Common myeloid progenitor, CD34-positive (primary cell): ENCODE measurements at regions of chr2 and their contacts with region 1.

Region 1: GRCh38 chr2:10072656-10073480 is 7.3 kb downstream of the CYS1 start:
- DNase-seq: peak; percentile 86 to 93 (median 90)
- H3K4me3 ChIP-seq: no peak overlapping the region
- H3K27ac ChIP-seq: no peak overlapping the region
- H3K4me1 ChIP-seq: peaks cover 0 to 4% (median under 1%) of the 10 kb centered on the region in 4 experiments
- H3K27me3 ChIP-seq: peaks cover 0 to 52% (median 19%) of the 10 kb centered on the region in 5 experiments

Region 2: DNA sequence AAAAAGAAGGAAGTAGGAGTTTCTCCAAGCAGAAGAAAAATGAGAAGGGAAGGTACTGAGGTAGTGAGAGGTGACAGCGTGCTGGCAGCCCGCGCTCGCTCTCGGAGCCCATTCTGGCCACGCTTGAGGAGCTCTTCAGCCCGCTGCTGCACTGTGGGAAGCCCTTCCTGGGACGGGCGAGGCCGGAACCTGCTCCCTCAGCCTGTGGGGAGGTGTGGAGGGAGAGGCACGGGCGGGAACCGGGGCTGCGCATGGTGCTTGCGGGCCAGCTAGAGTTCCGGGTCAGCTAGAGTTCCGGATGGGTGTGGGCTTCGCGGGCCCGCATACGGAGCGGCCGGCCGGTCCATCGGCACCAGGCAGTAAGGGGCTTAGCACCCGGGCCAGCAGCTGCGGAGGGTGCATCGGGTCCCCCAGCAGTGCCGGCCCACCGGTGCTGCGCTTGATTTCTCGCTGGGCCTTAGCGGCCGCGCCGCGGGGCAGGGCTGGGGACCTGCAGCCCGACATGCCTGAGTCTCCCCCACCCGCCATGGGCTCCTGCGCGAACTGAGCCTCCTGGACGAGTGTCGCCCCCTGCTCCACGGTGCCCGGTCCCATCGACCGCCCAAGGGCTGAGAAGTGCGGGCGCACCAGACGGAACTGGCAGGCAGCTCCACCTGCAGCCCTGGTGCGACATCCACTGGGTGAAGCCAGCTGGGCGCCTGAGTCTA is 18.5 kb after region 1 on chr2:
- CTCF ChIA-PET with region 1: interaction called, 130 read pairs
- POLR2A ChIA-PET with region 1: interaction called, 3 read pairs
- DNase-seq: peak; percentile 29 to 67 (median 46)
- H3K4me3 ChIP-seq: peak overlapping the region in 6 of 7 experiments; percentile 43 to 75 (median 52)
- H3K27ac ChIP-seq: no peak overlapping the region
- H3K4me1 ChIP-seq: peaks cover 0 to 8% (median 6%) of the 10 kb centered on the region in 4 experiments
- H3K27me3 ChIP-seq: peaks cover 0 to 39% (median 12%) of the 10 kb centered on the region in 5 experiments

Region 3: DNA sequence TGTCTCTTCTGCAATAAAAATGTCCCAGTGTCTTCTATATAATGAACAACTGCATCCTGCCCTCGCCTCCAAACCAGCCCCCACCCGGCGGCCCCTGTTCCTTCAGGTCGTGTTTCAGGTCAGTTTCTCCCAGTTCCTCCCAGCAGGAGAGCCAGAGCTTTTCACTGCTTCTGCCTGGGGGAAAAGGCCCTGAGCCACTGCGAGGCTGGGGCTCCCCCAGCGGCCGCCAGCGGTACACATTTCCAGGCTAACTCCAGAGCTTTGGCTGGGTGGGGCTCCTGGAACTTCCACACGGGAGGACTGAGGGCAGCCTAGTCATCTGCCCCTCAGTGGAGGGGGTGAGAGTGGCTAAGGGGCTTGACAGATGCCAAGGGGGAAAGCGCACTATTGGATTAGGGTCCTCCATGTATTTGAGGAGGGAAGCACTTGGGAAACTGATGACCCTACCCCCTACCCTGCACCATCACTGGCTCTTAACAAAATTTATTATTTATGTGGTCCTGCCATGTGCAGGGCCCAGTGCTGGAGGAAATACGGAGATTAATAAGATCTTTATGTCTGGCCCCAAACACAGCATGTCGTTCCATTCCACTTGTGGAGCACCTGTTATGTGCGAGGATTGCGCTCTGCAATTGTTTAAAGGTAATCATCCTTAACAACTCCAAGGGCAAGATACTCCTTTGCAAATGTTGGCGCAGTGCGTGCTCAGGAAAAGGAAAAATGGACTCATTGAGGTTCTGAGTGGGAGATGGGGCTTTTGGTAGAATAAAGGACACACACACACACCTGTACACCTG is 24.7 kb after region 1 on chr2:
- CTCF ChIA-PET with region 1: interaction called, 130 read pairs
- POLR2A ChIA-PET with region 1: no interaction called
- DNase-seq: peak in 1 of 3 donors; percentile 20
- H3K4me3 ChIP-seq: no peak overlapping the region
- H3K27ac ChIP-seq: no peak overlapping the region
- H3K4me1 ChIP-seq: no peaks in the 10 kb centered on the region
- H3K27me3 ChIP-seq: peaks cover 0 to 20% (median 6%) of the 10 kb centered on the region in 5 experiments

Region 4: DNA sequence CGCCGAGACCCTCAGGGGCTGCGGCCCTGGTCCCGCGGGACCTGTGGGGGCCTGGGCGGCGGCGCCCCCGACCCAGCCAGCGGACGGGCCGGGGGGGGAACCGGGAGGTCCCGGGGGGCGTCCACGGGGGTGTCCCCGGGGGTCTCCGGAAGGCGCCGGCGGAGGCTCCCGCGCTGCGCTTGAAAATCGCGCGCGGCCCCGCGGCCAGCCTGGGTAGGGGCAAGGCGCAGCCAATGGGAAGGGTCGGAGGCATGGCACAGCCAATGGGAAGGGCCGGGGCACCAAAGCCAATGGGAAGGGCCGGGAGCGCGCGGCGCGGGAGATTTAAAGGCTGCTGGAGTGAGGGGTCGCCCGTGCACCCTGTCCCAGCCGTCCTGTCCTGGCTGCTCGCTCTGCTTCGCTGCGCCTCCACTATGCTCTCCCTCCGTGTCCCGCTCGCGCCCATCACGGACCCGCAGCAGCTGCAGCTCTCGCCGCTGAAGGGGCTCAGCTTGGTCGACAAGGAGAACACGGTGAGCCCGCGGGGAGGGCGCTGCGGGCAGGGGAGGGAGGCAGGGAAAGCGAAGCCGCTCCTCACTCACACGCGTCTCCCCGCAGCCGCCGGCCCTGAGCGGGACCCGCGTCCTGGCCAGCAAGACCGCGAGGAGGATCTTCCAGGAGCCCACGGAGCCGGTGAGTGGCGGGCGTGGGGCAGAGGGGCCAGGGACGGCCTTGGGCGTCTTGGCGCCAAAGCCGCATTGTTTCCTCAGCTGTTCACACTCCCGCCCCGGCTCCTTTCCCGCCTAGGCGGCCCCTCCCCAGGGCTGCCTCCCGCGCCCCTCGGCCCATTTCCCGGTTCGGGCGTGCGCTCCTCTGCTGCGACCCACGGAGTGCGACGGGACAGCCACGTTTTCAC is 49.8 kb after region 1 on chr2 and contains the start of gene RRM2:
- CTCF ChIA-PET with region 1: interaction called, 17 read pairs
- POLR2A ChIA-PET with region 1: no interaction called
- DNase-seq: peak; percentile 85 to 94 (median 93)
- H3K4me3 ChIP-seq: peak within 1 kb of the TSS; percentile 54 to 94 (median 82)
- H3K27ac ChIP-seq: peak within 1 kb of the TSS in 1 of 2 experiments; percentile 77
- H3K4me1 ChIP-seq: peaks cover 12 to 66% (median 48%) of the 10 kb centered on the region in 4 experiments
- H3K27me3 ChIP-seq: no peaks in the 10 kb centered on the region